Caco-2 (cell line): ENCODE measurements at regions of chr6 and their contacts with region 1.

Region 1: DNA sequence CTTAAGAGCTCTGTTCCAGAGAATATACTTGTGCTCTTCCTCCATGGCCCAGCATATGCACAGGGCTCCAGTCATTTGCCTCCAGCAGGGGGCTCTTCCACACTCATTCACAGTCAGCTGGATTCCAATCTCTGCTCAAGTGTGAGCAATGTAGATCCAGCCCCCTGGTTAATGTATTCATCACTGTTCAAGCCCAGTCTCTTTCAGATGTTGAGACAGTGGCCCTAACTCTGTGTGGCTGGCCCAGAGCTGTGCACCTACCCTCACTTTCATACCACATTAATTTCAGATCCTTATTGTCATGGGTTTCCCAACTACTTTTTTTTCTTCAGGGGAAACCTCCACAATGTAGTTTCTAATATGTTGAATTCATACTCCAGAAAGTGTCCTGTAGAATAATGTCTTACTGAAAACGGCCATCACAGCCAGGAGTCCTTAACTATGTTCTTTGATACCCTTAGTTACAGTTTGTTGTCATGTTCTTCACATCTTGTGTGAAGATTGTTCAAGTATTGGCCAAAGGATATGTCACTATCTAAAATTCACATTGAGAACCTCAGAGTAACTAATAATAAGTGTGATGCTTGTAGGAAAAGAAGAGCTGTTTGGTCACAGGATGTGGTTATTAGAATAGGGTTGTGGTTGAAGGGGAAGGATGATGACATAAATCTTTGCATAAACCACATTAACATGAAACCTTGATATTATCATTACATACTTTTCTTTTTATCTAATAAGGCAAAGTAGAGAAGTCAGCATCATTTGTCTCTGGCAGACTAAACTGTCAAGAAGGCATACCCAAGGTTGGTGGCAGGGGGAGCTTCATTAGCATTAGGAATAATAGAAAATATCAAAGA is 14.4 kb upstream of the HLA-DQA1 start:
- DNase-seq: no peak
- H3K4me3 ChIP-seq: no peak overlapping the region
- H3K4me3 Mint-ChIP-seq: no peak overlapping the region
- H3K27ac Mint-ChIP-seq: no peak overlapping the region
- H3K4me1 ChIP-seq: no peaks in the 10 kb centered on the region
- H3K4me1 Mint-ChIP-seq: no peaks in the 10 kb centered on the region
- H3K27me3 ChIP-seq: no peaks in the 10 kb centered on the region
- H3K27me3 Mint-ChIP-seq: peaks cover 5% of the 10 kb centered on the region
- CTCF ChIP-seq: no peak

Region 2: DNA sequence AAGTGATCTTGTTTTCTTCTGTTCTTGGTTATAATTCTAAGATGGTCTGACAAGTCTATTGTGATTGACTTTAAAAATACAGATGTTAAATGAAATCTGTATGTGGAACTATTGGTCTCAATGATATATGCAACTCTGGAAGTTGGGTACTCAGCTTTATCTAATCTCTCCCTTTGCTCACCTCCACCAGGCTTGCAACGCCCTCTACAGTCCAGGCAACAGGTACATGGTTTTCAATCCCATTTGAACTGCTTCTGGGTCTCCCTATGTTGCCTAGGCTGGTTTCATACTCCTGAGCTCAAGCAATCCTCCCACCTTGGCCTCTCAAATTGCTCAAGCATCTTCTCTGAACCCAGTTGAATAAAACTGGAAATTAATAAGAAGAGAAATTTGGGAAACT is 69.2 kb after region 1 on chr6:
- CTCF ChIA-PET with region 1: interaction called, 3 read pairs
- POLR2A ChIA-PET with region 1: no interaction called
- intact Hi-C with region 1: loop called (anchors 1 kb)
- DNase-seq: peak; percentile 14 to 37
- H3K4me3 ChIP-seq: no peak overlapping the region
- H3K4me3 Mint-ChIP-seq: no peak overlapping the region
- H3K27ac Mint-ChIP-seq: no peak overlapping the region
- H3K4me1 ChIP-seq: no peaks in the 10 kb centered on the region
- H3K4me1 Mint-ChIP-seq: no peaks in the 10 kb centered on the region
- H3K27me3 ChIP-seq: no peaks in the 10 kb centered on the region
- H3K27me3 Mint-ChIP-seq: peaks cover 5% of the 10 kb centered on the region
- CTCF ChIP-seq: peak; percentile 15 to 43